ENCODE measurements at regions of chr7 and their contacts with region 1.

Region 1: GRCh38 chr7:43700059-43700501 is 29.2 kb downstream of the COA1 start:
- DNase-seq: no peak
- CTCF ChIP-seq: peak; percentile 56

Region 2: GRCh38 chr7:42843205-42843800 is 856.8 kb before region 1 on chr7:
- in situ Hi-C with region 1: no loop called
- DNase-seq: no peak
- CTCF ChIP-seq: peak; percentile 37

Region 3: GRCh38 chr7:43294080-43294630 is 405.9 kb before region 1 on chr7:
- in situ Hi-C with region 1: loop called (anchors 25 kb)
- DNase-seq: no peak
- CTCF ChIP-seq: no peak

Region 4: GRCh38 chr7:43405948-43406347 is 294.1 kb before region 1 on chr7:
- in situ Hi-C with region 1: no loop called
- DNase-seq: no peak
- CTCF ChIP-seq: no peak

Region 5: DNA sequence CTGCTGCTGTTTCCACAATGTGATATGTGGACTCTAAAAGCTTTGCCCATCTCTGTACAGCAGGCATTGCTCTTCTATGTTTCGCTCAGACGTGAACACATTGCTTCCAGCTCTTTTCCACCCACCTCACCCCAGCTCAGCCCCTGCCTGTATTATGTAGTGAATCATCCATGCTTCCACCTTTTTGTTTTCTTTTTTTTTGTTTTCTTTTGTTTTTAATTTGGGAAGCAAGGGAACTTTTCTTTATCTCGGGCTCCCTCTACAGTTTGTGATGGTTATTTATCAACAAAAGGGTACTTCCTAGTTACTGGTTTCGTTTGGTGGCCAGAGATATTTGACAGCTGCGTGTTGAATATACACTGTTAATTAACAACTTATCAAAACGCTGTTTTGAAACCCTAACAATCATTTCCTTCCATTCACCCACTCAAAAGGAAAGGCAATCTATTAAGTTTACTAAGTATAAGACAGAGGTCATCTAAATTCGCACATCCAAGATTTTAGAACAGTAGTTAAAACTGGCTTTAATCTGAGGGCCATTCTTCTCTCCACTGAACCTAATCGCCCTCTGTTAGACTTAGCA is 245.1 kb before region 1 on chr7:
- in situ Hi-C with region 1: loop called (anchors 25 kb)
- DNase-seq: peak; percentile 67
- CTCF ChIP-seq: peak; percentile 37

Region 6: DNA sequence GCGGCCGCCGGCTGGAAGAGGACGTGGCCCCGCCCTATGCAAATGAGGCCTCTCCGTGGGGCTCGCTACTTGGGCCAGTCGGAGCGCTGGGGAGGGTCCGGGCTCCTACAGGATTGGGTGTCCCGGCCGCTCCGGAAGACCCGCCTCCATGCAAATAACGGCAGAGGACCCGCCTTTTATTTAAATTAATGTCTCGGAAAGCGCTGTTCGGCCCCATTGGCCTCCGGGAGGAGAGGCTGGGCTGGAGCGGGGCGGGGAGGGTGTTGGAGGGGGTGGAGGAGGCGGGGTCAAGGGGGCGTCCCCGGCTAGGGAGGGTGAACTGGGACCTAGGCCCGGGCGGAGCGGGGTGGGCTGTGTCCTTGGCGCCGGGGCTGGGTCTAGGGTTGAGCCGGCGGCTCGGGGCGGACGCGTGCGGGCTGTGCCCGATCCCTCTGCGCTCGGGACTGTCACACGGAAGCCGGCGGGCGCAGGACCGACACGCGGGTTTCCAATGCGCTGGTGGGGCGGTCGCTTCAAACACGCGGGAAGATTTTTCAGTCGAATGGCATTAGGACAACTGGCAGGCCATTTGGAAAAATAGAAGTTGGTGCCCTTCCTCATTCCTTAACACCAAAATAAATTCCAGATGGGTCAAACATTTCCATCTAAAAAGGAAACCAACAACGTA is 382.6 kb after region 1 on chr7:
- in situ Hi-C with region 1: no loop called
- DNase-seq: peak; percentile 98
- CTCF ChIP-seq: no peak